ENCODE measurements at regions of chr21 and their contacts with region 1.

Region 1: GRCh38 chr21:23853796-23854379 is 1753.4 kb downstream of the MRPL39 start:
- DNase-seq: peak in 4 of 14 experiments; percentile 25 to 63 (median 52)
- ATAC-seq: peak; percentile 43
- H3K4me3 ChIP-seq: no peak overlapping the region
- H3K4me3 Mint-ChIP-seq: no peak overlapping the region
- H3K27ac ChIP-seq: no peak overlapping the region
- H3K27ac Mint-ChIP-seq: no peak overlapping the region
- H3K4me1 ChIP-seq: no peaks in the 10 kb centered on the region
- H3K4me1 Mint-ChIP-seq: peaks cover 6% of the 10 kb centered on the region
- H3K27me3 ChIP-seq: no peaks in the 10 kb centered on the region
- H3K27me3 Mint-ChIP-seq: no peaks in the 10 kb centered on the region
- CTCF ChIP-seq: no peak

Region 2: GRCh38 chr21:22679207-22679606 is 1174.7 kb before region 1 on chr21:
- CTCF ChIA-PET with region 1: no interaction called
- POLR2A ChIA-PET with region 1: no interaction called
- intact Hi-C with region 1: no loop called
- DNase-seq: no peak
- ATAC-seq: no peak
- H3K4me3 ChIP-seq: no peak overlapping the region
- H3K4me3 Mint-ChIP-seq: no peak overlapping the region
- H3K27ac ChIP-seq: no peak overlapping the region
- H3K27ac Mint-ChIP-seq: no peak overlapping the region
- H3K4me1 ChIP-seq: no peaks in the 10 kb centered on the region
- H3K4me1 Mint-ChIP-seq: no peaks in the 10 kb centered on the region
- H3K27me3 ChIP-seq: no peaks in the 10 kb centered on the region
- H3K27me3 Mint-ChIP-seq: no peaks in the 10 kb centered on the region
- CTCF ChIP-seq: no peak

Region 3: GRCh38 chr21:23706431-23706830 is 147.5 kb before region 1 on chr21:
- CTCF ChIA-PET with region 1: no interaction called
- POLR2A ChIA-PET with region 1: no interaction called
- intact Hi-C with region 1: no loop called
- DNase-seq: no peak
- ATAC-seq: no peak
- H3K4me3 ChIP-seq: no peak overlapping the region
- H3K4me3 Mint-ChIP-seq: no peak overlapping the region
- H3K27ac ChIP-seq: no peak overlapping the region
- H3K27ac Mint-ChIP-seq: no peak overlapping the region
- H3K4me1 ChIP-seq: no peaks in the 10 kb centered on the region
- H3K4me1 Mint-ChIP-seq: no peaks in the 10 kb centered on the region
- H3K27me3 ChIP-seq: no peaks in the 10 kb centered on the region
- H3K27me3 Mint-ChIP-seq: no peaks in the 10 kb centered on the region
- CTCF ChIP-seq: no peak

Region 4: GRCh38 chr21:23801292-23801691 is 52.6 kb before region 1 on chr21:
- CTCF ChIA-PET with region 1: no interaction called
- POLR2A ChIA-PET with region 1: no interaction called
- intact Hi-C with region 1: no loop called
- DNase-seq: no peak
- ATAC-seq: no peak
- H3K4me3 ChIP-seq: no peak overlapping the region
- H3K4me3 Mint-ChIP-seq: no peak overlapping the region
- H3K27ac ChIP-seq: no peak overlapping the region
- H3K27ac Mint-ChIP-seq: no peak overlapping the region
- H3K4me1 ChIP-seq: no peaks in the 10 kb centered on the region
- H3K4me1 Mint-ChIP-seq: no peaks in the 10 kb centered on the region
- H3K27me3 ChIP-seq: no peaks in the 10 kb centered on the region
- H3K27me3 Mint-ChIP-seq: no peaks in the 10 kb centered on the region
- CTCF ChIP-seq: no peak

Region 5: DNA sequence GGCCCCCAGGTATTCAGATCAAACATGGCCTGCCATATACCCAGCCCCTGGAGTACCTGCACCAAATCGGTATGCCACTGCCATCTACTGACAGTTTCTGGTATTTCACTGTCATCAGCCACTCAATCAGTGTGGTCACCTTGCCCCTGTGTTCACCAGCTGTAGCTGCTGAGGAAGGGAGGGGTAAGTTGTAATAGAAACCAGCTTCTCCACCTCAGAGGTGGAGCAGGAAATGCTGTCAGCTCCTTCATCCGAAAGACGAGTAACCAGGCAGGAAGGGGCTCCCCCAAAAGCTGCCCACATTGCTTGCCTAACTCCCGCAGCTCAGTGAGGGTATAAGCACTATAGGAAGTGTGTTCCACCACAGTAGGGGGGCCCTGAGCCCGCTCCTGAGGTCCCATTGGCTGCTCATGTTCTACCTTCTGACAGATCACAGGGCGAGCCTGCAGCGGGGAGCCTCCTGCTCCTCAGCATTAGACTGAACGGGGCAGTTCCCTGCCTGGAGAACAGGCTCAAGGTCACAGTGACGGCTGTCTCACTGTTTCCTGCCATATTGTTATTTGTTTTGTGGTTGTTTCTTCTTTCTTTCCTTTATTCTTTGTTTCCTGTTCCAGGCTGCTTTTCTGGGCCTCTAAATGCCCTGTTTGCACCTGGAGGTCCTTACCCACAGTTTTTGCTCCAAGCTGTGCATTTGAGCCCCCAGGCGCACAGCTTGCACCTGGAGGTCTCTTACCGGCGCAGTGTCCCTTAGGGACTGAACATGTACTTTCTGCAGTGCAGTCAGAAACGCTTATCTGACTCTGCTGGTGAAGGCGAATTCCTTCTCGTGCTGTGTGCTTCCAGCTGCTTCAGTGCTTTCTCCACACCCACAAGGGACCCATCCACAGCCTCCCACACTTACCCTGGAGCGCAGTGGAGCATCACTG is 115.1 kb after region 1 on chr21:
- CTCF ChIA-PET with region 1: interaction called, 3 read pairs
- POLR2A ChIA-PET with region 1: no interaction called
- intact Hi-C with region 1: loop called (anchors 1 to 5 kb)
- DNase-seq: peak; percentile 26 to 87 (median 49)
- ATAC-seq: peak; percentile 85
- H3K4me3 ChIP-seq: peak overlapping the region; percentile 20
- H3K4me3 Mint-ChIP-seq: peak overlapping the region; percentile 69
- H3K27ac ChIP-seq: peak overlapping the region in 1 of 2 donors; percentile 20
- H3K27ac Mint-ChIP-seq: peak overlapping the region; percentile 4
- H3K4me1 ChIP-seq: peaks cover 15% of the 10 kb centered on the region
- H3K4me1 Mint-ChIP-seq: peaks cover 23% of the 10 kb centered on the region
- H3K27me3 ChIP-seq: no peaks in the 10 kb centered on the region
- H3K27me3 Mint-ChIP-seq: no peaks in the 10 kb centered on the region
- CTCF ChIP-seq: peak; percentile 49

Region 6: DNA sequence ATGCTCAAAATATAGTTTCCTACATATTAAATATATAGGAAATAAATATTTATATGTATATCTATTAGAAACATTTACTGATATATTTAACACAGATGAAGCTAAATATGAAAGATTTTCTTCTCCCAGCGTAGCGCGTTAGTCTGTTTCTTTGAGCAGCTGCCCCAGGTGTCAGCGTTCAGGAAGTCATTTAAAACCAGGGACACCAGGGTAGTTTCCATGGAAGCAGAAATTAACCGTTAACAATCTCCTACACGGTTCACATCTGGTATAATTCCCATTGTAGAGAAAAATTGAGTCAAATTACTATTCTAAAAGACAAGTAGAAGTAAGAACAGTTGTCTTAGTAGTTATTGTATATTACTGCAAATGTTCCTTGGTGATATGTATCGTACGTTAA is 309.7 kb after region 1 on chr21:
- CTCF ChIA-PET with region 1: no interaction called
- POLR2A ChIA-PET with region 1: no interaction called
- intact Hi-C with region 1: no loop called
- DNase-seq: no peak
- ATAC-seq: no peak
- H3K4me3 ChIP-seq: no peak overlapping the region
- H3K4me3 Mint-ChIP-seq: no peak overlapping the region
- H3K27ac ChIP-seq: no peak overlapping the region
- H3K27ac Mint-ChIP-seq: no peak overlapping the region
- H3K4me1 ChIP-seq: no peaks in the 10 kb centered on the region
- H3K4me1 Mint-ChIP-seq: no peaks in the 10 kb centered on the region
- H3K27me3 ChIP-seq: no peaks in the 10 kb centered on the region
- H3K27me3 Mint-ChIP-seq: no peaks in the 10 kb centered on the region
- CTCF ChIP-seq: no peak

Region 7: GRCh38 chr21:24514081-24514733 is 660.3 kb after region 1 on chr21:
- CTCF ChIA-PET with region 1: no interaction called
- POLR2A ChIA-PET with region 1: no interaction called
- intact Hi-C with region 1: loop called (anchors 5 to 10 kb)
- DNase-seq: peak in 1 of 14 experiments; percentile 9
- ATAC-seq: no peak
- H3K4me3 ChIP-seq: no peak overlapping the region
- H3K4me3 Mint-ChIP-seq: no peak overlapping the region
- H3K27ac ChIP-seq: no peak overlapping the region
- H3K27ac Mint-ChIP-seq: no peak overlapping the region
- H3K4me1 ChIP-seq: no peaks in the 10 kb centered on the region
- H3K4me1 Mint-ChIP-seq: no peaks in the 10 kb centered on the region
- H3K27me3 ChIP-seq: no peaks in the 10 kb centered on the region
- H3K27me3 Mint-ChIP-seq: no peaks in the 10 kb centered on the region
- CTCF ChIP-seq: peak; percentile 39

Region 8: DNA sequence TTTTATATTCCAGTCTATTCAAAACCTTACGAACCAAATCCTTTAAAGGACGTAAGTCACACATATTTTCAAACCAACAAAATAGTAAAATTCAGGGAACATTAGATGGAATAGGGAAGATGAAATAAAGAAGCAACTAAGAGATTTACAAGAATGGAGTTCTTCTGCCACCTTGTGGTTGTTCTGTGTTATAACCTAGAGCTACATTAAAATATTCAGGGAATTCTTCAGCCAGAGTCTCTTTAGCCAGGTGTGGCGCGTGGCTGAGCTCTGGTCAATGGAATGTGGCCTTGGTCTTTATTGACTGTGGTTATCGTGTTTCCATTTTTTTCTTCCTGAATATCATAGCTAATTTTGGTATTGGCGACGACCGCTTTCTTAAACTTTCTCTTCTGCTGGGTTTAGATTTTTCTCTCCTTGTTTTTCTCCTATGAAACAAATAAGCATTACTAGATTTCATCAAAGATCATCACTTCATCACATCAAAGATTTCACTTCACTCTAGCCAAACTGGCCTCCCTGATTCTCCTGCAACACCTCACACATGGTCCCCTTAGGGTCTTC is 1532.1 kb after region 1 on chr21:
- CTCF ChIA-PET with region 1: no interaction called
- POLR2A ChIA-PET with region 1: no interaction called
- intact Hi-C with region 1: loop called (anchors 2 to 5 kb)
- DNase-seq: peak in 4 of 14 experiments; percentile 4 to 65 (median 52)
- ATAC-seq: no peak
- H3K4me3 ChIP-seq: no peak overlapping the region
- H3K4me3 Mint-ChIP-seq: no peak overlapping the region
- H3K27ac ChIP-seq: no peak overlapping the region
- H3K27ac Mint-ChIP-seq: no peak overlapping the region
- H3K4me1 ChIP-seq: no peaks in the 10 kb centered on the region
- H3K4me1 Mint-ChIP-seq: peaks cover 11% of the 10 kb centered on the region
- H3K27me3 ChIP-seq: no peaks in the 10 kb centered on the region
- H3K27me3 Mint-ChIP-seq: peaks cover 5% of the 10 kb centered on the region
- CTCF ChIP-seq: peak; percentile 96

Measured in CD4-positive, alpha-beta T cell (primary cell).